ENCODE measurements at regions of chrX and their contacts with region 1.

Region 1: GRCh38 chrX:63434665-63435064 is 83.5 kb upstream of the SPIN4 start:
- DNase-seq: peak; percentile 21 to 85 (median 52)
- ATAC-seq: peak; percentile 96
- H3K4me3 ChIP-seq: no peak overlapping the region
- H3K27ac ChIP-seq: peak overlapping the region; percentile 60
- H3K4me1 ChIP-seq: peaks cover 0 to 6% of the 10 kb centered on the region in 2 experiments; a peak in 3 of 5 replicates
- H3K27me3 ChIP-seq: no peaks in the 10 kb centered on the region
- CTCF ChIP-seq: 0 out of 6 replicates have a peak, but pooled peaks of 1 of the 3 experiments have one; percentile 14
- EP300 ChIP-seq: peak; percentile 74
- POLR2A ChIP-seq: no peak
- RAD21 ChIP-seq: no peak; a peak in 1 of 4 replicates

Region 2: GRCh38 chrX:63250253-63250868 is 184.3 kb before region 1 on chrX:
- CTCF ChIA-PET with region 1: no interaction called
- POLR2A ChIA-PET with region 1: no interaction called
- in situ Hi-C with region 1: no loop called
- intact Hi-C with region 1: no loop called
- DNase-seq: peak; percentile 12 to 73 (median 17)
- ATAC-seq: peak; percentile 95
- H3K4me3 ChIP-seq: no peak overlapping the region
- H3K27ac ChIP-seq: no peak overlapping the region
- H3K4me1 ChIP-seq: no peaks in the 10 kb centered on the region
- H3K27me3 ChIP-seq: no peaks in the 10 kb centered on the region
- CTCF ChIP-seq: peak; percentile 64 to 98 (median 97)
- EP300 ChIP-seq: no peak
- POLR2A ChIP-seq: no peak
- RAD21 ChIP-seq: peak; percentile 72 to 91

Region 3: GRCh38 chrX:63506320-63506719 is 71.7 kb after region 1 on chrX:
- CTCF ChIA-PET with region 1: no interaction called
- POLR2A ChIA-PET with region 1: no interaction called
- in situ Hi-C with region 1: no loop called
- intact Hi-C with region 1: loop called (anchors 10 kb)
- DNase-seq: peak in 2 of 4 experiments; percentile 4 to 44
- ATAC-seq: peak; percentile 74
- H3K4me3 ChIP-seq: no peak overlapping the region
- H3K27ac ChIP-seq: no peak overlapping the region
- H3K4me1 ChIP-seq: no peaks in the 10 kb centered on the region
- H3K27me3 ChIP-seq: no peaks in the 10 kb centered on the region
- CTCF ChIP-seq: peak in 2 of 3 experiments; percentile 43 to 46; a peak in 3 of 6 replicates
- EP300 ChIP-seq: no peak
- POLR2A ChIP-seq: no peak
- RAD21 ChIP-seq: peak; percentile 35 to 69; a peak in 3 of 4 replicates

Region 4: DNA sequence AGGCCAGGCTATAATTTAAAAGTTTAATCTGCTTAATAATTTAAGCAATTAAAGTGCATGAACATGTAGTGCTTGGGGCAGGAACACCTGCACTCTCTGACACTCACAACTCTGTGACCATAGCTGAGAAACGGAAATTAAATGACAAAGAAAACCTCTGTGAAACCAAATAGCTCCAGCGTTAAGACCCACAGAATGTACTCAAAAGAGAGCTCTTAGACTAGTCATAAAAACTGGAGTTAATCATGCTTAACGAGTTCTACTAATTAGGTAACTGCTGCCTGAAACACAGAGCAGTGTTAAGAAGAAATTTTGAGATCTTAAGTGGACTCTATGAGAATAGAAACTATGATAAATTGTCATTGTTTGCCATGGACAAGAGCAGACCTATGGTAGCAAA is 90.8 kb after region 1 on chrX:
- CTCF ChIA-PET with region 1: no interaction called
- POLR2A ChIA-PET with region 1: no interaction called
- in situ Hi-C with region 1: no loop called
- intact Hi-C with region 1: no loop called
- DNase-seq: no peak
- ATAC-seq: no peak
- H3K4me3 ChIP-seq: no peak overlapping the region
- H3K27ac ChIP-seq: no peak overlapping the region
- H3K4me1 ChIP-seq: no peaks in the 10 kb centered on the region
- H3K27me3 ChIP-seq: no peaks in the 10 kb centered on the region
- CTCF ChIP-seq: no peak
- EP300 ChIP-seq: no peak
- POLR2A ChIP-seq: no peak
- RAD21 ChIP-seq: no peak

Measured in K562 (cell line).